ENCODE measurements at regions of chr20 and their contacts with region 1.

Region 1: DNA sequence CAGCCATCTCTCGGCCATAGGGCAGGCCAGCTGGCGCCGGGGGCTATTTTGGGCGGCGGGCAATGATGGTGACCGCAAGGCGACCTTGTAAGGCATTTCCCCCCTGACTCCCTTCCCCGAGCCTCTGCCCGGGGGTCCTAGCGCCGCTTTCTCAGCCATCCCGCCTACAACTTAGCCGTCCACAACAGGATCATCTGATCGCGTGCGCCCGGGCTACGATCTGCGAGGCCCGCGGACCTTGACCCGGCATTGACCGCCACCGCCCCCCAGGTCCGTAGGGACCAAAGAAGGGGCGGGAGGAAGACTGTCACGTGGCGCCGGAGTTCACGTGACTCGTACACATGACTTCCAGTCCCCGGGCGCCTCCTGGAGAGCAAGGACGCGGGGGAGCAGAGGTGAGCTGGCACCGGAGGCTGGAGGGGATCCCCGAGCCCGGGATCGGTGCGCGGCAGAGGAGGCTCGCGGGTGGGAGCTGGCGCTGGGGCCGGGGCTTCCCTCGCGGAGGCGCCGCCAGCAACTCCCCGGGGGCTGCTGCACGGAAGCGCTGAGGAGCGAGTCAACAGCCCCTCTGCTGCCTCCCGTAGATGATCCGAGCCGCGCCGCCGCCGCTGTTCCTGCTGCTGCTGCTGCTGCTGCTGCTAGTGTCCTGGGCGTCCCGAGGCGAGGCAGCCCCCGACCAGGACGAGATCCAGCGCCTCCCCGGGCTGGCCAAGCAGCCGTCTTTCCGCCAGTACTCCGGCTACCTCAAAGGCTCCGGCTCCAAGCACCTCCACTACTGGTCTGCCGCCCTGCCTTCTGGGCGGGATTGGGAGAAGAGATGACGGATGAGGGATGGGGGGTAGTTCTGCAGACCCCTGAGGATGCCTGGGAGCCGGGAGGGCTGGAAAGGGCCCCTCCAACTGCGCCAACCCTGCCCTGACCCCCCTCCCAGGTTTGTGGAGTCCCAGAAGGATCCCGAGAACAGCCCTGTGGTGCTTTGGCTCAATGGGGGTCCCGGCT is at the starts of genes CTSA and NEURL2:
- DNase-seq: peak; percentile 96 to 99 (median 97)
- ATAC-seq: peak; percentile 91
- H3K4me3 ChIP-seq: peak within 1 kb of the TSS; percentile 67
- H3K27ac ChIP-seq: peak within 1 kb of the TSS; percentile 53
- H3K4me1 ChIP-seq: no peaks in the 10 kb centered on the region
- H3K27me3 ChIP-seq: no peaks in the 10 kb centered on the region
- total RNA-seq, gene CTSA: 102 to 134 (median 112) TPM
- total RNA-seq, gene NEURL2: 7.5 to 9.8 (median 7.9) TPM

Region 2: GRCh38 chr20:45842169-45842812 is 49.0 kb before region 1 on chr20:
- intact Hi-C with region 1: no loop called
- DNase-seq: peak in 1 of 3 donors; percentile 29
- ATAC-seq: peak; percentile 24 to 27
- H3K4me3 ChIP-seq: no peak overlapping the region
- H3K27ac ChIP-seq: peak overlapping the region; percentile 43
- H3K4me1 ChIP-seq: peaks cover 4% of the 10 kb centered on the region
- H3K27me3 ChIP-seq: no peaks in the 10 kb centered on the region

Region 3: GRCh38 chr20:45867819-45868176 is 23.5 kb before region 1 on chr20:
- intact Hi-C with region 1: no loop called
- DNase-seq: no peak
- ATAC-seq: no peak
- H3K4me3 ChIP-seq: no peak overlapping the region
- H3K27ac ChIP-seq: no peak overlapping the region
- H3K4me1 ChIP-seq: no peaks in the 10 kb centered on the region
- H3K27me3 ChIP-seq: no peaks in the 10 kb centered on the region

Region 4: DNA sequence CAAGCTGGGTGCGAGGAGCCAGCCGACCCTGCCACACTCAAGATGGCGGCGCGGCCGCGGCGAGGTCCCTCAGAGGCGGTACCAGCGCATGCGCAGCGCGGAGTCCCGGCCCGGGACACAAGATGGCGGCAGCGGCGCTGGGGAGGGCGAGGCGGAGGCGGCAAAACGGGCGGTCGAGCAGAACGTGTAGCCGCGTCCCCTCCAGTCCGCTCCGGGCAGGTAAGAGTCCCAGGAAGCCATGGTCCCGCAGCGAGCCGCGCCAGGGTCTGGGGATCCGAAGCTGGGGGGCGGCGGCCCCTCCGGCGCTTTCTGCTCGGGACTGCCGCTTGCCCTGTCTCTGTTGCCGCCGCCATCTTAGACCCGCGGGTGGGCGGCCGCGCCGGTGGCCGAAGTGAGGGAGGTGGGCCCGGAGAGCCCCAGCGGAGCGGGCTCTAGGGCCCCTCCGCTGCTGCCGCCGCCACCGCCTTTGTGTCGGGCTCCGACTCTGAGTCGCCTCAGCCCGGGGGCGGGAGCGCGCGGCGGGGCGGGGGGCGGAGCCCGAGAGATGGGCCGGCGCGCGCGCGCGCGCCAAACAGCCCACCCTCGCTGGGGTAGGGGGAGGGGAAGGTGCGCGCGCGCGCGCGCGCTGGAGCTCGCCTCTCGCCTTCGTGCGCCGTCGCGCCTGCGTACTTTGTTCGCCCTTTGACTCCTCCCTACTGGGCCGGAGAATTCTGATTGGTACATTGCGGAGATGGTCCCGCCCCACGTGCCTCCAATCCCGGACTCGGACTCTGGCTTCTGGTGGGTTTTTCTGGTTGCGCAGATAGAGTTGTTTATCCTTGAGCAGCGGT is 43.5 kb after region 1 on chr20 and contains the start of gene PCIF1:
- intact Hi-C with region 1: loop called in 1 of 4 experiments (anchors 2 kb)
- DNase-seq: peak; percentile 98 to 100 (median 99)
- ATAC-seq: peak; percentile 92 to 93
- H3K4me3 ChIP-seq: peak within 1 kb of the TSS; percentile 92
- H3K27ac ChIP-seq: peak within 1 kb of the TSS; percentile 98
- H3K4me1 ChIP-seq: peaks cover 6% of the 10 kb centered on the region
- H3K27me3 ChIP-seq: no peaks in the 10 kb centered on the region
- total RNA-seq, gene PCIF1: 28.0 to 31.8 (median 29.6) TPM

Region 5: DNA sequence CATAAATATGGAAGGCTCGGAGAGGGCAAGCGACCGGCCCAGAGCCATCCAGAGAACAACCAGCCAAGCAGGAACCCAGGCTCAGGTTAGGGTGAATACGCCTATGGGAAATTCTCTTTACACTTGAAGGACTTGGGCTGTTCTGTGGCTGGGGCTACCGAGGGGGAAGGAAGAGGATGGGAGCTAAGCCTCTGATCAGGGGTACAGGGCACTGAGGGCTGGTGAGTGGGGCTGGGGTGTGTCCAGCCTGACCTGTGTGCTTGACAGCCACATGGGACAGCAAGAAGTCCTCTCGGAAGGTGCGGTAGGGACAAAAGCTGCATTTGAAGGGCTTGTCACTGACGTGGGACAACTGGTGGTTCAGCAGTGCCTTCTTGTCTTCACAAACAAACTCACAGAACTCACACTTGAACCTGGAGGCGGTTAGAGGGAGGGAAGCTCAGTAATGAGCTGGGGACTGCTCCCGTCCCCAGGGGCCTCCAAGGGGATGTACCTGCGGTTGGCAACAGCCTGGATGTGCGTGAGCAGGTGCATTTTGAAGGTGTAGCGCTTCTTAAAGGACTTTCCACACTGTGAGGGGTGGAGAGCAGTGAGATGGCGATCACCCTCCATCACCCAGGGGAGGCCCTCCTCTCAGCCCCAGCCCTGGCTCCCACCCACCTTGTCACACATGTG is 68.8 kb after region 1 on chr20:
- intact Hi-C with region 1: loop called in 2 of 4 experiments (anchors 10 kb)
- DNase-seq: peak in 1 of 3 donors; percentile 27
- ATAC-seq: no peak
- H3K4me3 ChIP-seq: no peak overlapping the region
- H3K27ac ChIP-seq: no peak overlapping the region
- H3K4me1 ChIP-seq: no peaks in the 10 kb centered on the region
- H3K27me3 ChIP-seq: no peaks in the 10 kb centered on the region

Region 6: GRCh38 chr20:45969347-45970242 is 78.3 kb after region 1 on chr20:
- intact Hi-C with region 1: loop called in 1 of 4 experiments (anchors 10 kb)
- DNase-seq: peak in 2 of 3 donors; percentile 63 to 64
- ATAC-seq: no peak
- H3K4me3 ChIP-seq: no peak overlapping the region
- H3K27ac ChIP-seq: no peak overlapping the region
- H3K4me1 ChIP-seq: no peaks in the 10 kb centered on the region
- H3K27me3 ChIP-seq: no peaks in the 10 kb centered on the region

Region 7: DNA sequence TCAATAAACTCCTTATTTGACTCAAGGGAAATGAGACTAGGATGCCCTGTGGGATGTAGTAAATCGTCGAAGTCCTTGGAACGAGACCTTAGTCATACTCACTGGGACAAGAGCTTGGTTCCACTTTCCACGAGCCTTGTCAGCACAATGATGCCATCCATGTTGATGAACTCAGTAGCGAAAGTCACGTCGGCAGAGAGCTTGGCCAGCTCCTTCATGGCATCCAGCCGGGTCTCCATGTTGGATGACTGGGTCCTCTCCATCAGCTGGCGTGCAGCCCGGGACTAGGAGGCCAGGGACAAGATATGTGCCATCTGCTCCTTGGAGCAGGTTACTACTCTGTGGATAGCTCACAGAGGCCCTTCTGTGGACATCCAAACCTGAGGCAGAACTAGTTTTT is 497.7 kb after region 1 on chr20:
- intact Hi-C with region 1: no loop called
- DNase-seq: peak; percentile 50 to 64 (median 62)
- ATAC-seq: peak in 1 of 2 donors; percentile 29
- H3K4me3 ChIP-seq: no peak overlapping the region
- H3K27ac ChIP-seq: no peak overlapping the region
- H3K4me1 ChIP-seq: no peaks in the 10 kb centered on the region
- H3K27me3 ChIP-seq: no peaks in the 10 kb centered on the region

Measured in right cardiac atrium (tissue), 5 donors.